Heart right ventricle (tissue), 16 donors: ENCODE measurements at regions of chr4 and their contacts with region 1.

Region 1: GRCh38 chr4:125323654-125324053 is 8.9 kb downstream of the FAT4 start:
- DNase-seq: peak in 1 of 2 donors; percentile 8
- ATAC-seq: peak; percentile 47 to 86 (median 66)
- H3K4me3 ChIP-seq: peak overlapping the region in 7 of 10 donors; percentile 19 to 36 (median 31)
- H3K27ac ChIP-seq: peak overlapping the region in 8 of 10 donors; percentile 1 to 72 (median 50)
- H3K4me1 ChIP-seq: peaks cover 4 to 75% (median 60%) of the 10 kb centered on the region in 9 donors
- H3K27me3 ChIP-seq: no peaks in the 10 kb centered on the region
- CTCF ChIP-seq: no peak

Region 2: DNA sequence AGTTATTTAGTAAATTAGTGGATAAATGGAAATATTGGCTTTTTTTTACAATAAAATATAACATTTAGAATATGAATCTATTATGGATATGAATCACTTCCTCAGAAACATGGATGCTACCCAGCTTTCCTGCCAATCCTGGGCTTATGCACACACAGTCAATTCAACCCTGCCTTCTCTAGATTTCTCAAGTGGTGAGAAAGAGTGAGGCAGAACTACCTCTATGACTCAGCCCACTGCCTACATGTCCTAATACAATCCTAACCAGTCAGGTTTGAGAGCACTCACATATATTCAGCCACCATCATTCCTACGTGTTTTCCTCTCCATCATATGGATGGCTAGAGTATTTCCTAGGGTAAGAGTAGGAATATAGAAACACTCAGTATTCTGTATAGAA is 520.0 kb before region 1 on chr4:
- intact Hi-C with region 1: no loop called
- DNase-seq: no peak
- ATAC-seq: no peak
- H3K4me3 ChIP-seq: no peak overlapping the region
- H3K27ac ChIP-seq: no peak overlapping the region
- H3K4me1 ChIP-seq: no peaks in the 10 kb centered on the region
- H3K27me3 ChIP-seq: no peaks in the 10 kb centered on the region
- CTCF ChIP-seq: no peak

Region 3: DNA sequence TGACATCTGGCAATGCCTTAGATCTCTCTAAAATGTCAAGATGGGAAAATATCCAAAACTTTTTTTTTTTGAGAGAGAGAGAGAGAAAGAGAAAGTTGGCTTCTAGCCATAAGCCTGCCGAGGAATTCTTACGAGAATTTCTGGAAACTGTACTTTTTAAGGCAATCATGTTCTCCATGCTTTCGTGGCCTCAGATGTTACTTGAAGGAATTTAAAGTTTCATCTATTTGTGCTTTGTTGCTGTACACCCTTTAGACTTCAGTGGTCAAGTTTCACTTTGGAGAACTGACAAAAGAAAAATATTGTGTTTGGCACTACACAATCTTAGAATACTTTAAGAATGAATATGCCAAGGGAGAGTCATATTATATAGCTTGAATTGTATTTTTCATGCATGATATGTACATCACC is 45.0 kb after region 1 on chr4:
- intact Hi-C with region 1: loop called in 1 of 10 experiments (anchors 5 kb)
- DNase-seq: no peak
- ATAC-seq: peak in 2 of 8 donors; percentile 25 to 45
- H3K4me3 ChIP-seq: peak overlapping the region in 8 of 10 donors; percentile 13 to 49 (median 42)
- H3K27ac ChIP-seq: peak overlapping the region in 7 of 10 donors; percentile 6 to 62 (median 45)
- H3K4me1 ChIP-seq: peaks cover 0 to 23% (median 16%) of the 10 kb centered on the region in 9 donors
- H3K27me3 ChIP-seq: no peaks in the 10 kb centered on the region
- CTCF ChIP-seq: no peak

Region 4: GRCh38 chr4:125389713-125390112 is 66.1 kb after region 1 on chr4:
- intact Hi-C with region 1: loop called in 4 of 10 experiments (anchors 2 to 5 kb)
- DNase-seq: no peak
- ATAC-seq: peak in 7 of 8 donors; percentile 53 to 88 (median 82)
- H3K4me3 ChIP-seq: peak overlapping the region in 2 of 10 donors; percentile 1 to 21
- H3K27ac ChIP-seq: peak overlapping the region; percentile 6 to 85 (median 71)
- H3K4me1 ChIP-seq: peaks cover 0 to 64% (median 40%) of the 10 kb centered on the region in 9 donors
- H3K27me3 ChIP-seq: no peaks in the 10 kb centered on the region
- CTCF ChIP-seq: no peak

Region 5: GRCh38 chr4:125419905-125420304 is 96.3 kb after region 1 on chr4:
- intact Hi-C with region 1: no loop called
- DNase-seq: no peak
- ATAC-seq: no peak
- H3K4me3 ChIP-seq: no peak overlapping the region
- H3K27ac ChIP-seq: no peak overlapping the region
- H3K4me1 ChIP-seq: peaks cover 0 to 19% (median 9%) of the 10 kb centered on the region in 9 donors
- H3K27me3 ChIP-seq: no peaks in the 10 kb centered on the region
- CTCF ChIP-seq: no peak

Region 6: GRCh38 chr4:125432104-125432503 is 108.5 kb after region 1 on chr4:
- intact Hi-C with region 1: loop called in 7 of 10 experiments (anchors 5 to 10 kb)
- DNase-seq: no peak
- ATAC-seq: peak in 6 of 8 donors; percentile 75 to 89 (median 80)
- H3K4me3 ChIP-seq: no peak overlapping the region
- H3K27ac ChIP-seq: peak overlapping the region in 1 of 10 donors; percentile 27
- H3K4me1 ChIP-seq: peaks cover 0 to 22% (median 10%) of the 10 kb centered on the region in 9 donors
- H3K27me3 ChIP-seq: no peaks in the 10 kb centered on the region
- CTCF ChIP-seq: peak in 8 of 9 donors; percentile 18 to 54 (median 41)